ENCODE measurements at regions of chr2 and their contacts with region 1.

Region 1: DNA sequence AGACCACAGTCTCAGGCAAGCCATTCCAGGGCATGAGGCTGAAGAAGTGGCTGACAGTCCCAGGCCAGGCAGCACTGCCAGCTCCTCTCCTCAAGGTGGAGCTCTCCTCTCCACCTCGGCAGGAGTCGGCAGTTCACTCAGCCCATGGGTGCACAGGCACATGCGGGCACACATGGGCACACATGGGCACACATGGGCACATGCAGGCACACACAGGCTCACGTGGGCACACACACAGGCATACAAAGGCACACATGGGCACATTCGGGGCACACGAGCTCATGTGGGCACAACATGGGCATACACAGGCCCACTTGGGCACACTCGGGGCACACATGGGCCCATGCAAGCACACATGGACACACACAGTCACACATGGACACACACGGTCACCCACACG is 65.3 kb upstream of the TAF1B start:
- DNase-seq: peak; percentile 55
- H3K4me3 Mint-ChIP-seq: no peak overlapping the region
- H3K27ac Mint-ChIP-seq: peak overlapping the region; percentile 38
- H3K4me1 Mint-ChIP-seq: peaks cover 47% of the 10 kb centered on the region
- H3K27me3 Mint-ChIP-seq: no peaks in the 10 kb centered on the region

Region 2: DNA sequence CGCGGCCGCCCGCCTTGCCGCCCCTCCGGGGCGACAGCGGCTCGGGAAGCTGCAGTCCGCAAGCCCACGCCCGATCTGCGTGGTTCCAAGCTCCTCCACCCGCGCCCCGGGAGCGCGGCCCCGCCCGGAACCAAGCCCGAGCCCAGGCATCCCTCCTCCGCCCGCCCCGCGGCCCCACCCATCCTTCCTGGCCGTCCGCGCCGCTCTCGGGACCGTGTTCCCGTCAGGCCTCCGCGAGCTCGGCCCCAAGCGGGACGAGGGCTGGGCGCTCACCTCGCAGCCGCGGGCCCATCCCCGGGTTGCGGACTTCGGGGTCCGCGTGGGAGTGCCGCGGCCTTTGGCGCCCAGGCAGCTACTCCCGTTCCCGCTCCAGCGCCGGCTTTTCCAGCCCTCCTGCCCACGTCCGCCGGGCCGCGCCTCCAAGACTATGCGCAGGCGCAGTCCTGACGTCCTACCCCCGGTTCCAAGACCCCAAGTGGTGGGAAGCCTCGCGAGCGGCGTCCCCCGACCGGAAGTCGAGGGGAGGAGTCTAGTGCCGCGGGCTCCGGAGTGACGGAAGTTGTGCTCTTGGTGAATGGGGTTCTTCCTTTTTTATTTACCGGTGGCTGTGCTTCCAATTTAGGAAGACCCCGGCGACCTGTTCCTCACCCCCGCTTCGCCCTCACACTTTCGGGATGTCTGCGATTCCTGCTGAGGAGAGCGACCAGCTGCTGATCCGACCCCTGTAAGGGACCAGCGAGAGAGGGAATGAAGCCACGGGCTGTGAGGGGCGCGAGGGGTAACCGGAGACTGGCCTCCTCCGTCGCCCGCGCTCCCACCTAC is 354.7 kb before region 1 on chr2 and contains the starts of genes CPSF3 and ITGB1BP1:
- CTCF ChIA-PET with region 1: no interaction called
- POLR2A ChIA-PET with region 1: no interaction called
- intact Hi-C with region 1: loop called (anchors 5 kb)
- DNase-seq: peak; percentile 98
- H3K4me3 Mint-ChIP-seq: peak within 1 kb of the TSS; percentile 87
- H3K27ac Mint-ChIP-seq: peak within 1 kb of the TSS; percentile 88
- H3K4me1 Mint-ChIP-seq: peaks cover 35% of the 10 kb centered on the region
- H3K27me3 Mint-ChIP-seq: no peaks in the 10 kb centered on the region
- total RNA-seq, gene CPSF3: 77.5 to 78.1 TPM
- total RNA-seq, gene ITGB1BP1: 136 to 142 TPM

Region 3: DNA sequence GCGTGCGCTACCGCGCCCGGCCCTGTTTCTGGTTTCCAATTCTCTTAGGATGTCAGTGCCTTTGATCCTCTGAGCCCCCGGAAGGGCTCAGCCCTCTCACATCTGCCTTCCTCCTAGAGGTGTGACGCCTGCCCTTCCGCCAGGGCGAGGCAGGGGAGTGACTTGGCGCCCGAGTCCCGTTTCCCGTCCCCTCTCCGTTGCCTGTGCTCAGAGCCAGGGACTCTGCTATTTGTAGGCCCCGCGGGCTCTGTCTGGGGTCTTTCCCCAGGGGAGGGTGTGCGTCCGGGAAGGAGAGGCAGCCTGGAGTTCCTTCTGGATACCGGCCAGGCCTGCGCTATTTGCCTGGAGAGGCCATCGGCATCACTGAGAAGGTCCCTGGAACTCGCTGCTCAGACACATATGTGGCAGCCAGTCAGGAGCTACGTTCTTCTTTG is 38.5 kb before region 1 on chr2:
- CTCF ChIA-PET with region 1: interaction called, 3 read pairs
- POLR2A ChIA-PET with region 1: no interaction called
- intact Hi-C with region 1: loop called (anchors 2 kb)
- DNase-seq: peak; percentile 77
- H3K4me3 Mint-ChIP-seq: peak overlapping the region; percentile 75
- H3K27ac Mint-ChIP-seq: peak overlapping the region; percentile 89
- H3K4me1 Mint-ChIP-seq: peaks cover 52% of the 10 kb centered on the region
- H3K27me3 Mint-ChIP-seq: no peaks in the 10 kb centered on the region